B cell (primary cell): ENCODE measurements at regions of chr17 and their contacts with region 1.

Region 1: GRCh38 chr17:38485146-38485468 is 56.8 kb downstream of the ARHGAP23 start:
- DNase-seq: no peak
- ATAC-seq: no peak
- H3K4me3 ChIP-seq: no peak overlapping the region
- H3K4me3 Mint-ChIP-seq: peak overlapping the region; percentile 82
- H3K27ac ChIP-seq: no peak overlapping the region
- H3K27ac Mint-ChIP-seq: no peak overlapping the region
- H3K4me1 ChIP-seq: peaks cover 0 to 11% of the 10 kb centered on the region in 2 donors
- H3K4me1 Mint-ChIP-seq: peaks cover 20% of the 10 kb centered on the region
- H3K27me3 ChIP-seq: no peaks in the 10 kb centered on the region
- H3K27me3 Mint-ChIP-seq: peaks cover 4% of the 10 kb centered on the region
- CTCF ChIP-seq: no peak

Region 2: GRCh38 chr17:38421871-38422827 is 63.0 kb before region 1 on chr17:
- CTCF ChIA-PET with region 1: interaction called, 6 read pairs
- POLR2A ChIA-PET with region 1: no interaction called
- intact Hi-C with region 1: loop called (anchors 2 kb)
- DNase-seq: no peak
- ATAC-seq: no peak
- H3K4me3 ChIP-seq: no peak overlapping the region
- H3K4me3 Mint-ChIP-seq: no peak overlapping the region
- H3K27ac ChIP-seq: no peak overlapping the region
- H3K27ac Mint-ChIP-seq: no peak overlapping the region
- H3K4me1 ChIP-seq: peaks cover 6% of the 10 kb centered on the region in 2 donors
- H3K4me1 Mint-ChIP-seq: peaks cover 10% of the 10 kb centered on the region
- H3K27me3 ChIP-seq: peaks cover 0 to 91% (median 30%) of the 10 kb centered on the region in 4 experiments
- H3K27me3 Mint-ChIP-seq: peaks cover 52% of the 10 kb centered on the region
- CTCF ChIP-seq: no peak

Region 3: GRCh38 chr17:38498186-38498752 is 13.2 kb after region 1 on chr17:
- CTCF ChIA-PET with region 1: no interaction called
- POLR2A ChIA-PET with region 1: no interaction called
- intact Hi-C with region 1: no loop called
- DNase-seq: no peak
- ATAC-seq: no peak
- H3K4me3 ChIP-seq: no peak overlapping the region
- H3K4me3 Mint-ChIP-seq: no peak overlapping the region
- H3K27ac ChIP-seq: no peak overlapping the region
- H3K27ac Mint-ChIP-seq: no peak overlapping the region
- H3K4me1 ChIP-seq: no peaks in the 10 kb centered on the region
- H3K4me1 Mint-ChIP-seq: no peaks in the 10 kb centered on the region
- H3K27me3 ChIP-seq: no peaks in the 10 kb centered on the region
- H3K27me3 Mint-ChIP-seq: peaks cover 6% of the 10 kb centered on the region
- CTCF ChIP-seq: no peak

Region 4: GRCh38 chr17:38628441-38628840 is 143.3 kb after region 1 on chr17:
- CTCF ChIA-PET with region 1: no interaction called
- POLR2A ChIA-PET with region 1: no interaction called
- intact Hi-C with region 1: no loop called
- DNase-seq: no peak
- ATAC-seq: no peak
- H3K4me3 ChIP-seq: no peak overlapping the region
- H3K4me3 Mint-ChIP-seq: no peak overlapping the region
- H3K27ac ChIP-seq: no peak overlapping the region
- H3K27ac Mint-ChIP-seq: no peak overlapping the region
- H3K4me1 ChIP-seq: no peaks in the 10 kb centered on the region
- H3K4me1 Mint-ChIP-seq: peaks cover 4% of the 10 kb centered on the region
- H3K27me3 ChIP-seq: peaks cover 0 to 2% (median 0%) of the 10 kb centered on the region in 4 experiments
- H3K27me3 Mint-ChIP-seq: peaks cover 14% of the 10 kb centered on the region
- CTCF ChIP-seq: no peak

Region 5: GRCh38 chr17:38702166-38702899 is 217.2 kb after region 1 on chr17:
- CTCF ChIA-PET with region 1: no interaction called
- POLR2A ChIA-PET with region 1: no interaction called
- intact Hi-C with region 1: no loop called
- DNase-seq: peak; percentile 92
- ATAC-seq: peak; percentile 42
- H3K4me3 ChIP-seq: peak overlapping the region; percentile 76 to 95 (median 93)
- H3K4me3 Mint-ChIP-seq: peak overlapping the region; percentile 99
- H3K27ac ChIP-seq: peak overlapping the region; percentile 91 to 97
- H3K27ac Mint-ChIP-seq: peak overlapping the region; percentile 99
- H3K4me1 ChIP-seq: peaks cover 17 to 51% of the 10 kb centered on the region in 2 donors
- H3K4me1 Mint-ChIP-seq: peaks cover 50% of the 10 kb centered on the region
- H3K27me3 ChIP-seq: no peaks in the 10 kb centered on the region
- H3K27me3 Mint-ChIP-seq: no peaks in the 10 kb centered on the region
- CTCF ChIP-seq: no peak

Region 6: DNA sequence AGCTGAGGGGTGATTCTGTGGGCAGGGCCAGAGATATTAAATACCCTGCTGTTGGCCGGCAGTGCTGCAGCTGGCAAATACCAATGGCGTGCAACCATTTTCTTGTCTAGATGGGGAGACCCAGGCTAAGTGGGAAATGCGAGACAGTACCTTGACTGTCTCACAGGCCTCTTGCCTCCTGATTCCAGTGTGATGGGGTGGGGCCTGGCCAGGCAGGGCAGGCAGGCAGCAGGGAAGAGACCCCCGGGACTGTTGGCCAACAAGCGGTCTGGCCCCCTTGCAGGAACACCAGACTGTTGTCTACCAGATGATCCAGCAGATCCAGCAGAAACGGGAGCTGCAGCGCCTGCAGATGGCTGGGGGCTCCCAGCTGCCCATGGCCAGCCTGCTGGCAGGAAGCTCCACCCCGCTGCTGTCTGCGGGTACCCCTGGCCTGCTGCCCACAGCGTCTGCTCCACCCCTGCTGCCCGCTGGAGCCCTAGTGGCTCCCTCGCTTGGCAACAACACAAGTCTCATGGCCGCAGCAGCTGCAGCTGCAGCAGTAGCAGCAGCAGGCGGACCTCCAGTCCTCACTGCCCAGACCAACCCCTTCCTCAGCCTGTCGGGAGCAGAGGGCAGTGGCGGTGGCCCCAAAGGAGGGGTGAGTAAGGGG is 239.4 kb after region 1 on chr17:
- CTCF ChIA-PET with region 1: no interaction called
- POLR2A ChIA-PET with region 1: no interaction called
- intact Hi-C with region 1: no loop called
- DNase-seq: no peak
- ATAC-seq: no peak
- H3K4me3 ChIP-seq: no peak overlapping the region
- H3K4me3 Mint-ChIP-seq: no peak overlapping the region
- H3K27ac ChIP-seq: no peak overlapping the region
- H3K27ac Mint-ChIP-seq: no peak overlapping the region
- H3K4me1 ChIP-seq: peaks cover 24 to 40% of the 10 kb centered on the region in 2 donors
- H3K4me1 Mint-ChIP-seq: peaks cover 39% of the 10 kb centered on the region
- H3K27me3 ChIP-seq: no peaks in the 10 kb centered on the region
- H3K27me3 Mint-ChIP-seq: no peaks in the 10 kb centered on the region
- CTCF ChIP-seq: no peak